ENCODE measurements at regions of chr20 and their contacts with region 1.

Region 1: DNA sequence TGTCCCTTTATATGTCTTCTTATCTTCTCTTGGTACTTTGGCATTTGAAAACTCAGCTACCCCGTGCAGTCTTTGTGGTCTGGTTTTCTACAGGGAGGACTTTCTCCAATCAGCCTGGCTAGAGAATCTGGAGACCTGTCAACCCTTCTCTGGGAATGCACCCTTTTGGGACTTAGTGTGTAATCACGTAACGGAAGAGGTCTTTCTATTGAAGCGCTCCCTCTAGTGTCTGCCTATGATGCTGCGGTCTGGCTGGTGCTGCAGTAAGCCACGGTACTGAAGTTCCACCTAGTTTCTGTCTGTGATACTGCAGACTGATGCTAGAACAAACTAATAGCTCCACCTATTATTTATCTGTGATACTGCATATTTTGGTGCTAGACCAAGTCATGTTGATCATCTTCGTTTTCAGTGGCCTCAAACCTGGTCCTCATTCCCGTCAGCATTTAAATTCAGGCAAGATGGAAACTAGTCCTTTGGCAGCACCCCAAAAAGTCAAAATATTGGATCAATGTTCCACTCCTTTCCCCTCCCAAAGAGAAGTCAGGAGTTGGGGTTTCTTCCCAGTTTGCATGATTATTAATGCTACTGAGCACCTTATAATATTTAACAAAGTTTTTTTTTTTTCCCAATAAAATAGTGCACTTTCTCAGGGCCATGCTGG is 12.5 kb upstream of the SIRPB2 start:
- DNase-seq: peak; percentile 45
- ATAC-seq: peak; percentile 100
- H3K4me3 Mint-ChIP-seq: no peak overlapping the region
- H3K27ac Mint-ChIP-seq: no peak overlapping the region
- H3K4me1 Mint-ChIP-seq: peaks cover 2% of the 10 kb centered on the region
- H3K27me3 Mint-ChIP-seq: peaks cover 23% of the 10 kb centered on the region
- CTCF ChIP-seq: peak; percentile 89

Region 2: DNA sequence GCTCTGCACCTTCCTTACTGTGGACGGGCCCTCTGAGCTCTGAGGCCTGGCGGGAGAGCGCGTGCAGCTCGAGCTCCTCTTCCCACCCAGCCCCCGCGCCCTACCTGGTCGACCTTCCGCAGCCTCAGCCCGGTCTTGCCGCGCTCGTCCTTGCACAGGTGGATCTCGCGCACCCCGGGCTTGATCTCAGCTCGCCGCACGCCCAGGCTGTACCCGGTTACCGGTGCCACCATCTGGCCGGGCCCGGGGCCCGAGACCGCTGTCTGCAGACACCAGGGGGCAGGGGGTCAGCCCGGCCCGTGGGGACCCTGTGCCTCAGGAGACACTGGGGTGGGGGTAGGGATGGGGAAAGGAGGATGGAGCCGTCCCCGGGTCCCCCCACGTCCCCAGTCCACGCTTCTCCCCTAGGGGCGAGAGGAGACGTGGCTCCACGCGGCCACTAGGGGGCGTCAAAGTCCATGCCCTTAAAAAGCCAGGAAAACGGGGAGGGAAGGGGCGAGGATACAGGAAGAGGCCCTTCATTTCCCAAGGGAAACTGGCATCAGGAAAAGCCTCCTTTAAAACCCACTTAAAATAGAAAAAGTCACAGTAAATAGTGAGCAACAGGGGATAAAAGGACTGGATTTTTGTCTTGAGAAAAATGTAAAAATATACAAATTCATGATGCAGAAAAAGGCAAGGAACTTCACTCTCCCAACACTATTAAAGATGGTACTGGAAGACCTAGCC is 190.3 kb before region 1 on chr20:
- CTCF ChIA-PET with region 1: interaction called, 24 read pairs
- POLR2A ChIA-PET with region 1: no interaction called
- intact Hi-C with region 1: loop called (anchors 1 kb)
- DNase-seq: peak; percentile 53
- ATAC-seq: peak; percentile 77
- H3K4me3 Mint-ChIP-seq: no peak overlapping the region
- H3K27ac Mint-ChIP-seq: no peak overlapping the region
- H3K4me1 Mint-ChIP-seq: peaks cover 2% of the 10 kb centered on the region
- H3K27me3 Mint-ChIP-seq: no peaks in the 10 kb centered on the region
- CTCF ChIP-seq: peak; percentile 90

Region 3: GRCh38 chr20:1474825-1475603 is 28.7 kb before region 1 on chr20:
- CTCF ChIA-PET with region 1: interaction called, 19 read pairs
- POLR2A ChIA-PET with region 1: interaction called, 3 read pairs
- intact Hi-C with region 1: no loop called
- DNase-seq: no peak
- ATAC-seq: no peak
- H3K4me3 Mint-ChIP-seq: no peak overlapping the region
- H3K27ac Mint-ChIP-seq: no peak overlapping the region
- H3K4me1 Mint-ChIP-seq: peaks cover 28% of the 10 kb centered on the region
- H3K27me3 Mint-ChIP-seq: no peaks in the 10 kb centered on the region
- CTCF ChIP-seq: no peak

Region 4: GRCh38 chr20:1535420-1536175 is 31.9 kb after region 1 on chr20:
- CTCF ChIA-PET with region 1: interaction called, 13 read pairs
- POLR2A ChIA-PET with region 1: no interaction called
- intact Hi-C with region 1: no loop called
- DNase-seq: no peak
- ATAC-seq: peak; percentile 68
- H3K4me3 Mint-ChIP-seq: no peak overlapping the region
- H3K27ac Mint-ChIP-seq: peak overlapping the region; percentile 60
- H3K4me1 Mint-ChIP-seq: peaks cover 40% of the 10 kb centered on the region
- H3K27me3 Mint-ChIP-seq: no peaks in the 10 kb centered on the region
- CTCF ChIP-seq: no peak

Measured in activated B cell treated with CpG ODN at 0.5 μM for 24 hours (primary cell).